Esophagus squamous epithelium (tissue), 5 donors: ENCODE measurements at regions of chr1 and their contacts with region 1.

Region 1: GRCh38 chr1:150561974-150562445 is 12.8 kb downstream of the ADAMTSL4 start:
- DNase-seq: peak; percentile 58
- H3K4me3 ChIP-seq: peak overlapping the region; percentile 28 to 72 (median 60)
- H3K27ac ChIP-seq: peak overlapping the region; percentile 98 to 100 (median 100)
- H3K4me1 ChIP-seq: peaks cover 70 to 89% (median 76%) of the 10 kb centered on the region in 3 donors
- H3K27me3 ChIP-seq: no peaks in the 10 kb centered on the region
- CTCF ChIP-seq: peak in 1 of 6 experiments; percentile 1
- POLR2A ChIP-seq: peak in 2 of 4 donors; percentile 27 to 65

Region 2: GRCh38 chr1:150621497-150622302 is 59.7 kb after region 1 on chr1:
- intact Hi-C with region 1: loop called (anchors 5 kb)
- DNase-seq: no peak
- H3K4me3 ChIP-seq: no peak overlapping the region
- H3K27ac ChIP-seq: peak overlapping the region; percentile 50 to 100 (median 84)
- H3K4me1 ChIP-seq: peaks cover 40 to 80% (median 67%) of the 10 kb centered on the region in 3 donors
- H3K27me3 ChIP-seq: no peaks in the 10 kb centered on the region
- CTCF ChIP-seq: peak; percentile 60 to 77 (median 70)
- POLR2A ChIP-seq: no peak